ENCODE measurements at regions of chr3 and their contacts with region 1.

Region 1: DNA sequence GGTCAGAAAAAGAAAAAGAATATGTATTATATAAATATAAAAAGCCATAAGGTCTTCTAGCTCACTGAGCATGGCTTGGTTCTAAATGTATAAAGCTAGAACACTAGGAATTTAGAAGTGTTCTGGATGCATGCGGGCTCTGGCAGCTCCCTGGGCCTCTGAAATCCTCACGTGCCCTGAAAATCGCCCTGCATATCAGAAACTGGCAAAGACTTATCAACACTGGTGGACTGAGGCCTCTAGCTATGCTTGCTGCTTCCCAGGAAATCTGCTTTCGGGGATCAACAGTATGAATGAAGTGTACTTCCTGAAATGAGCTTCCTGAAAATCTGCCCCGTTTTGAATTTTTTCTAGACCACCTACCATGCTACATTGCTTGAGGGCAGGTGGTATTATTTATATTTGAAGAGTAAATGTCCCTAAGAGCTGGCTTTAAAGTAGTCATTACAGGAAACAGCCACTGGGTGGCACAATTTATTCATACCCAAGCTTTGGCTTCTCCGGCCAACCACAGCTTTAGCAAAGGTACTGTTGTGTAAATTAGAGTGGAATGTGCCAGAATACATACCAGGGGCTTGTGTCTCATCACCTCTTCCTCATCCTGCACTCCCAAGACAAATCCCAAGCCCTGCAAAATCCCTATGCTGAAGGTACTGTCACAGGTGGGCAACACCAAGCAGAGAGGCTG is 17.7 kb downstream of the CRTAP start:
- H3K4me3 Mint-ChIP-seq: no peak overlapping the region
- H3K27ac Mint-ChIP-seq: no peak overlapping the region
- H3K4me1 Mint-ChIP-seq: no peaks in the 10 kb centered on the region
- H3K27me3 Mint-ChIP-seq: no peaks in the 10 kb centered on the region

Region 2: DNA sequence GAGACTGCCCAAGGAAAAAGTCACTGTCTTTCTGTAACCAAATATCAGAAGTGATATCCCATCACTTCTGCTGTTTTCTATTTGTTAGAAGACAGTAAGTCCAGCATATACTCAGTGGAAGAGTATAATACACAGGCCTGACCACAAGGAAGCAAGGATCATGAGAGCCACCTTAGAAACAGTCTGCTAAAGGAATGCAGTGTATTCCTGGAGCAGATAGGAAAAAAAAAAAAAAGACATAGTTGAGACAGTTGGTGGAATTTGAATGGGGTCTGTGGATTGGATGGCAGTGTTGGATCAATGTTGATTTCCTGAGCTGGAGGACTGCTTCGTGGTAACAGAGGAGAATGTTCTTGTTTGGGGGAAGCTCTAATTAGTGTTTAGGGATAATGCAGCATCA is 119.2 kb after region 1 on chr3:
- intact Hi-C with region 1: loop called (anchors 5 kb)
- H3K4me3 Mint-ChIP-seq: no peak overlapping the region
- H3K27ac Mint-ChIP-seq: no peak overlapping the region
- H3K4me1 Mint-ChIP-seq: no peaks in the 10 kb centered on the region
- H3K27me3 Mint-ChIP-seq: no peaks in the 10 kb centered on the region

Region 3: DNA sequence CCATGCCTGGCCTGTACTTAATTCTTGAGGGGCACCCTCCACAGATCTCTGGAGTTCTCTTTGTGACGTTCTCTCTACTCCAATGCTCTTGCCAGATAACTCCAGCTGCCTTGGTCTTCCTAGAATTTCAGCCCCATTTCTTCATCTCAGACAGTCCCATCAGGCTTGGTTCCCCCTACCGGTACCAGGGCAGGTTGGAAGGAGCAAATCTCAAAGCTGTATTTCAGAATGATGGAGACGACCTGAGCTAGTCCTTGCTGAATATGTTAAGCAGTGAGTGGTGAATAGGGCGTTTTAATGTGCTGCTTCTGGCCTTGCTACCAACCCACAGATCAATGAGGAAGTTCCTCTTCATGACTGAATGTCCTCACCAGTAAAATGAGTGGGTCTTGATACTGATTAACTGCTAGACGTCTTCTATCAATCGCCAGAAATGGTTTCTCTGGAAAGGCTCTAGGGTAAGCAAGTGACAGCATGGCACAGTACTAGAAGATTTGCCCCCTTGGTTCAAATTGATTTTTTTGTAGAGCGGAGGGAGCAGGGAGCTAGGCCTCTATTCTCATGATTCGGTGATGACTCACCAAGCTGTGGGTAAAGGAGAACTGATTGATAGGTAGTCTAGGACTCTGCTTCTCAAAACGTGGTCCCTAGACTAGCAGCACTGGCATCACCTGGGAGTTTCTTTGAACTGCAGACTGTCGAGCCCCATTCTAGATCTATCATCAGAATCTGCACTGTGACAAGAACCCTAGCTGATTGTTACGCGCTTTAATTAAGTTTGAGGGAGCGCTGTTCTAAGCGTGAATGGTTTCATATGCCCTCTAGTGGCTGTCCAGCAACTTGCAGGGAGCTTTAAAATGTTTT is 241.0 kb after region 1 on chr3:
- intact Hi-C with region 1: loop called (anchors 1 kb)
- H3K4me3 Mint-ChIP-seq: no peak overlapping the region
- H3K27ac Mint-ChIP-seq: no peak overlapping the region
- H3K4me1 Mint-ChIP-seq: peaks cover 13% of the 10 kb centered on the region
- H3K27me3 Mint-ChIP-seq: peaks cover 2% of the 10 kb centered on the region